PC-3 (cell line): ENCODE measurements at regions of chr16 and their contacts with region 1.

Region 1: GRCh38 chr16:89246903-89247733 is 29.6 kb downstream of the ZNF778 start:
- DNase-seq: peak; percentile 78
- ATAC-seq: peak; percentile 89
- H3K4me3 ChIP-seq: peak overlapping the region; percentile 73
- H3K27ac ChIP-seq: peak overlapping the region; percentile 64
- H3K4me1 ChIP-seq: no peaks in the 10 kb centered on the region
- H3K27me3 ChIP-seq: no peaks in the 10 kb centered on the region
- CTCF ChIP-seq: 0 out of 2 replicates have a peak, but pooled peaks have one; percentile 20

Region 2: DNA sequence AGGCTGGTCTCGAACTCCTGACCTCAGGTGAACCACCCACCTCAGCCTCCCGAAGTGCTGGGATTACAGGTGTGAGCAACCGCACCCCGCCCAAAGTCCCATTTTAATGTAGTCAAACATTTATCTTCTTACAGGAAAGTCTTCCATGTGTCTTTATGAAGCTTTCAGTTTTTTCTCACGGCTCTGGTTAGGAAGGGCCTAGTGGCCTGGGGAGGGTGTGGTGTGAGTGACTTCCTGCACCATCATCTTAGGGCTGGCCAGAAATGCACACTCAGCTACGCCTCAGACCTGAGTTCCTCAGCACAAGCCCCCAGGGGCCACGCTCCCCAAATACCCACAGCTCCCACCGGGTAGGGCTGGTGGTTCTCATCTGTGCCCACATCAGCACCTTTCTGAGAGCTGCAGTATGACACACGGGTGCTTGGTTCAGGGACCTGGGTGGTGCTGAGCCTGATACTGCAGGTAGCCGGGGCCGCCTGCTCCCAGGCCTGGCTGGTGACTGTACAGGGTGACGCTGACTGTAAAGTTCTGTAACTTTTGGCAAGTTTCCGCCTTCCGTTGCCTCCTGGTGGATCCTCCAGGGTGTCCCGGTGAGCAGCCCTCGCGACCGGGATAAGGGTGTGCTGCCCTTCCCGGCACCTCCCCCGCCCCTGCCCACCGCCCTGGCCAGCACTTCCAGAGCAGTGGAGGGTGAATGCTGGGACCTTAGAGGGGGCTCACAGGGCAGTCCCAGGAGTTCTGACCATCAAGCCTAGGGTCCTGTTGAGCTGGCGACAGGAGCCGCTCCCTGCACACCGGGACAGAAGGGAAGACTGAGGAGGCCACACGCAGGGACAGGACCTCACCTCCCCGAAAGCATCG is 22.9 kb after region 1 on chr16:
- CTCF ChIA-PET with region 1: no interaction called
- POLR2A ChIA-PET with region 1: no interaction called
- intact Hi-C with region 1: loop called (anchors 1 kb)
- DNase-seq: peak; percentile 86
- ATAC-seq: peak; percentile 91
- H3K4me3 ChIP-seq: no peak overlapping the region
- H3K27ac ChIP-seq: peak overlapping the region; percentile 95
- H3K4me1 ChIP-seq: peaks cover 24% of the 10 kb centered on the region
- H3K27me3 ChIP-seq: no peaks in the 10 kb centered on the region
- CTCF ChIP-seq: no peak; the same call in 1 of the 2 replicates